Activated T-helper 1 cell treated with anti-CD3 and anti-CD28 coated beads, Interleukin-12 subunit alpha, Interleukin-12 subunit beta, Interleukin-2, Interleukin-4 antibody, amounts not matched to agents 30 ng/mL and 10 ng/mL and 1 ng/mL, durations not matched to agents 14 hours and 24 hours and 36 hours (primary cell): ENCODE measurements at regions of chr19 and their contacts with region 1.

Region 1: DNA sequence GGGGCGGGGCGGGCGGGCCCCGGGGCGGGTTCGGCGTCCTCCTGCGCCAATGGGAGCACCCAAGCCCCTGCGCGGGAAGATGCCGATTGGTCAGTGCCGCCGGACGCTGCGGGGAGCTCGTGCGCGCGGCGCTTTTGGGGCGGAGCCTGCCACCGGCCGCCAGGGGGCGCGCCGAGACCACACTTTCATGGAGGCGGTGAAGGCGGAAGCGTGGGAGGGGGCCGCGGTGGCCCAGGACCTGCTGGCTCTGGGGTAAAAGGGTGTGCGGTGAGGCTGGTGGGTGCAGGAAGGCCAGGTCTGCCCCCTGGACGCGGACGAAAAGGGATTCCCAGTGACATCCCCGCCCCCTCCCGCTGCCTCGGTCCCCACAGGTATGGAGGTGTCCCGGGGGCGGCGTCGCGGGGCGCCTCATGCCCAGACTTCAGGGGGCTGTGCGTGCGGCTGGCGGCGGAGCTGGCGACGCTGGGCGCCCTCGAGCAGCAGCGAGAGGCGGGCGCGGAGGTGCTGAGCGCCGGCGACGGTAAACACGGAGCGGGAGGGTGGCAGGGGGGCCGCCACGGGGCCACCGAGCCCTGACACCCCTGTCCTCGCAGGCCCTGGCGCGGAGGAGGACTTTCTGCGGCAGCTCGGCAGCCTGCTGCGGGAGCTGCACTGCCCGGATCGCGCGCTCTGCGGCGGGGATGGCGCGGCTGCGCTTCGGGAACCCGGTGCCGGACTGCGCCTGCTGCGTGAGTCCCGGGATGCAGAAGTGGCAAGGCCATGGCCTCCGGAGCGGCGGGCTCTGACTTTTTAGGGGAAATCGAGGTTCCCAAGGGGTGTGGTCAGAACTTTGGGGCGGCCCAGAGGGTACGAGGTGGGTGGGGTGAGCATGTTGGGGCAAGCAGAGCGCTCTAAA is at the start of gene FAM98C:
- DNase-seq: peak; percentile 98
- H3K4me3 Mint-ChIP-seq: peak within 1 kb of the TSS; percentile 89
- H3K27ac Mint-ChIP-seq: peak within 1 kb of the TSS; percentile 94
- H3K4me1 Mint-ChIP-seq: peaks cover 21% of the 10 kb centered on the region
- H3K27me3 Mint-ChIP-seq: no peaks in the 10 kb centered on the region
- total RNA-seq, gene FAM98C: 26.6 and 27.5 TPM in 2 replicates

Region 2: DNA sequence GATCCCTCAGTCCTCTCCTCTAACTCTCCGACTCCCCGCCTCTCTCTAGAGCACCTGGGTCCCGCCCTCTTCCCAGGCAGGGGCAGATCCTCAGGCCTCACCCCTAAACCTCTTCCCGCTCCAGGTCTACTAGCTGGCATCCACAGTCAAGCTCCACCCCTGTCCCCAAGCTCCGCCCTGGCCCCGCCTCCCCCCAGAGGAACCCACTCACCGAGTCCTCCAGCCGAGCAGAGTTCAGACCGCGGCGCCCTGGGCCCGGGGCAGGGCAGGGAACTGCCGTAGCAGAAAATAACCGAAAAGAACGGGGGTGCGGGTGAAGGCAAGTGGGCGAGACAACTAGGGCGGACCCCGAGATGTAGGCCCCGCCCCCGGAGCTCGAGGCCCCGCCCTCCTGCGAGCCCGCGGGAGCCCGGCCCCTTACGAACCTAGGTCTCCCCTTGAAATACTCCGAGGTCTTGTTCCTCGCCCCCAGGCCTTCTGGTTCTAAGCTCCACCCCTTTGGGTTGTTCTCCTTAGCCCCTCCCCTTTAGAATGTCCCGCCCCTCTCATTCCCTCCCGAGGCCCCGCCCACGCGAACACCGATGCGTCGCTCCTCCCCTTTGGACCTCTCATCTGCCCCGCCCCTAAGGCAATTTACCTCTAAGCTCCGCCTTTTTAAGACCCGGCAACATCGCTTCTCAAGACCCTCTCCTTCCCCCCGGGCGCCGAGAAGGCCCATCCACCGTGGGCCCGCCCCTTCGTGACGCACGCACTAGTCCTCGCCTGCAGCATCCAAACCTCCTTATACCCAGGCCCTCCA is 15.5 kb before region 1 on chr19 and contains the start of gene GGN:
- intact Hi-C with region 1: loop called (anchors 1 kb)
- DNase-seq: peak; percentile 73
- H3K4me3 Mint-ChIP-seq: peak within 1 kb of the TSS; percentile 89
- H3K27ac Mint-ChIP-seq: peak within 1 kb of the TSS; percentile 91
- H3K4me1 Mint-ChIP-seq: peaks cover 16% of the 10 kb centered on the region
- H3K27me3 Mint-ChIP-seq: peaks cover 21% of the 10 kb centered on the region
- total RNA-seq, gene GGN: 0.17 and 0.39 TPM in 2 replicates

Region 3: DNA sequence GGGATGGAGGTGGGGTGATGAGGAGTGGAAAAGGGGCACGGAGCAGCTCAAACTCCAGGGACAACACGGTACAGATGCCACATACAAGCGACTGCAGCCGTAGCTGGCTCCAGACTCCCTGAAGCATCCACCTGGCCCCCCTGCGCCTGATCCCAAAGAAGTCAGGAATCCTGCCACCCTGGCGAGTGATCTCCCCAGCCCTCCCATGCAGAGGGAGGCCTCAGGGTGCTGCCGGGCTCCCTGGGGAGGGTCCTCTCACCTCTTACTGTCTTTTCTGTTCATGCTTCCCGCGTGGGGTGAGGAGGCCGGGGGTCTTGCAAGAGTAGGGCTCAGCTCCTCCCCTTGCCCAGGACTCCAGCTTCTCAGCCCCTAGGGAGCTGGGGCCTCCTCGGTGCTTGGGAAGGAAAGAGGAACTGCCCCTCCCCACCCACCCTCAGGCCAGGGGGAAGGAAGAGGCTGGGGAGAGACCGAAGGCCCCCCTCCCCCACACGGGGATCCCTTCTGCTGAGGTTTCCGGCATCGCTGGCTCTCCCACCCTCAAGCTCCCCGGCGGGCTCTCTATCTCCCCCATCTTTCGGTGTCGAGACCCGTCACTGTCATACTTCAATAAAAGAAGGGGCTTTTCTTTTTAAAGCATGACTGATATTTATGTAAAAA is 22.7 kb after region 1 on chr19 and contains the start of gene RASGRP4:
- intact Hi-C with region 1: loop called (anchors 2 kb)
- DNase-seq: no peak
- H3K4me3 Mint-ChIP-seq: peak within 1 kb of the TSS; percentile 51
- H3K27ac Mint-ChIP-seq: peak within 1 kb of the TSS; percentile 90
- H3K4me1 Mint-ChIP-seq: peaks cover 32% of the 10 kb centered on the region
- H3K27me3 Mint-ChIP-seq: peaks cover 2% of the 10 kb centered on the region
- total RNA-seq, gene RASGRP4: 1.5 and 1.8 TPM in 2 replicates

Region 4: GRCh38 chr19:38506723-38507550 is 103.7 kb after region 1 on chr19:
- intact Hi-C with region 1: loop called (anchors 2 kb)
- DNase-seq: peak; percentile 84
- H3K4me3 Mint-ChIP-seq: no peak overlapping the region
- H3K27ac Mint-ChIP-seq: no peak overlapping the region
- H3K4me1 Mint-ChIP-seq: no peaks in the 10 kb centered on the region
- H3K27me3 Mint-ChIP-seq: peaks cover 13% of the 10 kb centered on the region

Region 5: GRCh38 chr19:38634757-38635482 is 231.7 kb after region 1 on chr19:
- intact Hi-C with region 1: loop called (anchors 1 kb)
- DNase-seq: peak; percentile 68
- H3K4me3 Mint-ChIP-seq: peak overlapping the region; percentile 43
- H3K27ac Mint-ChIP-seq: peak overlapping the region; percentile 83
- H3K4me1 Mint-ChIP-seq: peaks cover 36% of the 10 kb centered on the region
- H3K27me3 Mint-ChIP-seq: no peaks in the 10 kb centered on the region

Region 6: DNA sequence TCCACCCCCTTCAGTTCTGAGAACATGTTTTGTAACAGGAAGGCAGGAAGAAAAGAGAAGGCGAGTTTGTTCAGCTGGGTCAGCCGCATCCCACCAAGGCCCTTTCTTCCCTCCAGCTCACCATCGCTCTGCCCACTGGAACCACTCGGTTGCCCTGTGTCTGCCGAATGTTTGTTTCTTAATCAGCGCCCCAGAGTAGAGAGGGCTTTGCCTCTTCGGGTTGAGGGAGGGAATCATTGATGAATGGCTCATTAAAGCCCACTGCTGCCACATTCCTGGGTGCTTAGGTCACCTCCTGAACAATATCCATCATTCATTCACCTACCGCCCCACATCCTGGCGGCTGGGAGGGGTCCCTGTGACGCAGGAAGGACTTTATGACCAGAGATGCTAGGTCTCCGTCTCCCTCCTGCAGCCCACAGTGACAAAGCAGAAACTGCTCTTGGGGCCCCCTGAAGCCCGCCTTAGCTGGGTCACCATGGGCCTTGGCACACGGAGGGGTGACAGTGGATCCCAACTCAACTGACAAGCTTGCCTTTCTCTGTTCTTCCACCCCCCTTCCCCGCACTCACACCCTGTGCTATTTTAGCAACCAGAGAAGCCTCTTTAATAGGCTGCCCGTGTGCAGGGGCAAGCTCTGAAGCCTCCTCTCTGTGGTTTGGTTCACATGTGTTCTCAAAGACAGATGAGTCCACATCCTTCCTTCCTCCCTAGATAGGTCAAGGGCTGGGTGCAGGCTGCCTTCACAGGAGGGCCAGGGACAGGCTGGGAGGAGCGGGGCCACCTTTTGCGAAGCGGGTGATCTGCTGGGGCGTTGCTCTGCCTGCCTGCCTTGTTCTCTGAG is 290.4 kb after region 1 on chr19:
- intact Hi-C with region 1: no loop called
- DNase-seq: no peak
- H3K4me3 Mint-ChIP-seq: peak overlapping the region; percentile 46
- H3K27ac Mint-ChIP-seq: peak overlapping the region; percentile 51
- H3K4me1 Mint-ChIP-seq: peaks cover 84% of the 10 kb centered on the region
- H3K27me3 Mint-ChIP-seq: no peaks in the 10 kb centered on the region